ENCODE measurements at regions of chr14 and their contacts with region 1.

Region 1: DNA sequence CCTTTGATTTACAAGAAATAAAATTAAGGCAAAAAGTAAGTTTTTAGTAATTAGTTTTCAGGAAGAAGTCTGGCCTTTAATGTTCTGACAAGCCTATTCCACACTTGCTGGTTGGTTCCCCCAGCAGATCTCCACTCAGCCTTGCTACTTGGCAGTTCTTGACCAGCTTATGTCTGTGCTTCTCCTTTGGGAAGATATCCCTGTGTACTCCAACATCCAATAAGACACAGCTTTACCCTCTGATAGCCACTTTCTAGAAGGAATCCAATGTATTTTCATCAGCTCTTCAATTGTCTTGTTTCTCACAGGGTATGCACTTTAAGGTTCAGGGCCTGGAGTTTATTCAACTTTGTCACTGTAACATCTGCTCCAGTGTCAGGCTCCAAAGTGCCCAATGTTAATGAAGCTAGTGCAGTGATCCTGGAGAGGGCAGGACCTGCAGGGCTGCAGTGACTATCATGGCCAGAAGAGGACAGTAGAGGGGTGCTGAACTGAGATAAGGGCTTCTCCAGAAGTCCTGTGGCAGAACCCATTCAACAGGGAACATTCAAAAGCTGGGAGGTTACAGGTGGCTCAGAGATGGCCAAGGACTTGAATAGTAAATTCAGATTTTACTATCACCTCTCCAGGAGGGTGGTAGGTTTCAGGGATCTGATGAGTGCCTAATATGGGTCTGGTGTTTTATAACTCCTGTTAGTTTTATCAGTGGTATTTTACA is 22.9 kb downstream of the JKAMP start:
- DNase-seq: peak; percentile 78 to 81
- H3K4me3 ChIP-seq: no peak overlapping the region
- H3K4me3 Mint-ChIP-seq: no peak overlapping the region
- H3K27ac Mint-ChIP-seq: no peak overlapping the region
- H3K4me1 ChIP-seq: no peaks in the 10 kb centered on the region; the same call in 1 of the 2 replicates
- H3K4me1 Mint-ChIP-seq: peaks cover 12% of the 10 kb centered on the region
- H3K27me3 ChIP-seq: no peaks in the 10 kb centered on the region
- H3K27me3 Mint-ChIP-seq: no peaks in the 10 kb centered on the region
- CTCF ChIP-seq: peak; percentile 75 to 98

Region 2: DNA sequence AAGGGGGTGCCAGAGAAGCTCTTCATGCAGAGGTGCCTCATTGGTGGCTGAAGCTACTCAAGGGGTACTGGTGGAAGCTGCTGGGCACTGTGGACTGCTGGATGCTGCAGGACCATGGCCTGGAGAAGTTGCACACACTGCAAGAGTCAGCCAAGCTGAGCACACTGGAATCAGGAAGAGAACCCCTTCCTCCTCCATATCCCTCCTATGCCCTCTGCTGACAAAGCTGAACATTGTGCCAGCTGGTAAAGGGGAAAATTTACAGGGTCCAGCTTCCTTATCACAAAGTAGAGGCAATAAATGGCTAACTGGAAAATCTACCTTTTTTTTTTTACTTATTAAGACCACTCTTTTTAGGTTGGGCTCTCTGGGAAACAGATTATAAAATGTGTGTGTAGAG is 62.9 kb after region 1 on chr14:
- CTCF ChIA-PET with region 1: interaction called, 33 read pairs
- POLR2A ChIA-PET with region 1: no interaction called
- intact Hi-C with region 1: loop called (anchors 1 kb)
- DNase-seq: peak; percentile 27 to 38
- H3K4me3 ChIP-seq: no peak overlapping the region
- H3K4me3 Mint-ChIP-seq: no peak overlapping the region
- H3K27ac Mint-ChIP-seq: no peak overlapping the region
- H3K4me1 ChIP-seq: peaks cover 9% of the 10 kb centered on the region
- H3K4me1 Mint-ChIP-seq: peaks cover 10% of the 10 kb centered on the region
- H3K27me3 ChIP-seq: no peaks in the 10 kb centered on the region
- H3K27me3 Mint-ChIP-seq: no peaks in the 10 kb centered on the region
- CTCF ChIP-seq: peak; percentile 21 to 51

Region 3: GRCh38 chr14:59576332-59577294 is 69.4 kb after region 1 on chr14 and contains the start of gene CCDC175:
- CTCF ChIA-PET with region 1: interaction called, 24 read pairs
- POLR2A ChIA-PET with region 1: no interaction called
- intact Hi-C with region 1: loop called (anchors 1 kb)
- DNase-seq: peak; percentile 81 to 84
- H3K4me3 ChIP-seq: peak within 1 kb of the TSS; percentile 39
- H3K4me3 Mint-ChIP-seq: peak within 1 kb of the TSS; percentile 69
- H3K27ac Mint-ChIP-seq: no peak within 1 kb of the TSS
- H3K4me1 ChIP-seq: no peaks in the 10 kb centered on the region
- H3K4me1 Mint-ChIP-seq: no peaks in the 10 kb centered on the region
- H3K27me3 ChIP-seq: no peaks in the 10 kb centered on the region
- H3K27me3 Mint-ChIP-seq: no peaks in the 10 kb centered on the region
- CTCF ChIP-seq: peak; percentile 77 to 81
- total RNA-seq, gene CCDC175: not detected in 2 replicates

Region 4: GRCh38 chr14:59688224-59689170 is 181.3 kb after region 1 on chr14:
- CTCF ChIA-PET with region 1: interaction called, 12 read pairs
- POLR2A ChIA-PET with region 1: no interaction called
- intact Hi-C with region 1: loop called (anchors 1 kb)
- DNase-seq: peak; percentile 72 to 79
- H3K4me3 ChIP-seq: no peak overlapping the region
- H3K4me3 Mint-ChIP-seq: no peak overlapping the region
- H3K27ac Mint-ChIP-seq: no peak overlapping the region
- H3K4me1 ChIP-seq: no peaks in the 10 kb centered on the region
- H3K4me1 Mint-ChIP-seq: no peaks in the 10 kb centered on the region
- H3K27me3 ChIP-seq: no peaks in the 10 kb centered on the region; the same call in 1 of the 2 replicates
- H3K27me3 Mint-ChIP-seq: peaks cover 8% of the 10 kb centered on the region
- CTCF ChIP-seq: peak; percentile 82 to 85

Measured in Caco-2 (cell line).